Caco-2 (cell line): ENCODE measurements at regions of chr12 and their contacts with region 1.

Region 1: DNA sequence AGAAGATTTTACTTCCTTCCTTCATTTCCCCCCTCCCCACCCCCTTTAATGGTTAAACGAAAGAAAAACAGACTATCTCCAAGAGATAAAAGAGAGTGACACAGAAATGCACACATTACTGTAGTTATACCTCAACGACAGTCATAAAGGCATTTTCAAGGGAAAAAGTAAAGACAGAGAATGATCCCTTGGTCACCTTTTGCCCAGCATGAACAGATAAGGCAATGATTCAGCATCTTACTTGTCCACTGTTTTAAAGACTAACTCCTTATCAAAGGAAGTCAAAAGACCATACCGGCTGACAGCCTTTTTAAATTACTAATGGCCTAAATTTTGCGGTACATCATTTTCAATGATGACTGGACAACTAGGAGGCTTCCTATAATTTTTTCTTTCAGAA is 326.6 kb downstream of the PAWR start:
- DNase-seq: peak; percentile 48 to 62
- H3K4me3 ChIP-seq: no peak overlapping the region
- H3K4me3 Mint-ChIP-seq: no peak overlapping the region
- H3K27ac Mint-ChIP-seq: peak overlapping the region; percentile 63
- H3K4me1 ChIP-seq: peaks cover 64% of the 10 kb centered on the region
- H3K4me1 Mint-ChIP-seq: peaks cover 35% of the 10 kb centered on the region
- H3K27me3 ChIP-seq: no peaks in the 10 kb centered on the region
- H3K27me3 Mint-ChIP-seq: no peaks in the 10 kb centered on the region
- CTCF ChIP-seq: no peak

Region 2: GRCh38 chr12:79233341-79233781 is 130.8 kb before region 1 on chr12:
- CTCF ChIA-PET with region 1: no interaction called
- POLR2A ChIA-PET with region 1: no interaction called
- intact Hi-C with region 1: no loop called
- DNase-seq: no peak
- H3K4me3 ChIP-seq: no peak overlapping the region
- H3K4me3 Mint-ChIP-seq: no peak overlapping the region
- H3K27ac Mint-ChIP-seq: no peak overlapping the region
- H3K4me1 ChIP-seq: no peaks in the 10 kb centered on the region
- H3K4me1 Mint-ChIP-seq: no peaks in the 10 kb centered on the region
- H3K27me3 ChIP-seq: no peaks in the 10 kb centered on the region; the same call in 1 of the 2 replicates
- H3K27me3 Mint-ChIP-seq: peaks cover 5% of the 10 kb centered on the region
- CTCF ChIP-seq: no peak

Region 3: GRCh38 chr12:79300166-79300501 is 64.1 kb before region 1 on chr12:
- CTCF ChIA-PET with region 1: no interaction called
- POLR2A ChIA-PET with region 1: no interaction called
- intact Hi-C with region 1: loop called (anchors 2 kb)
- DNase-seq: peak; percentile 65 to 66
- H3K4me3 ChIP-seq: no peak overlapping the region
- H3K4me3 Mint-ChIP-seq: no peak overlapping the region
- H3K27ac Mint-ChIP-seq: no peak overlapping the region
- H3K4me1 ChIP-seq: peaks cover 13% of the 10 kb centered on the region
- H3K4me1 Mint-ChIP-seq: no peaks in the 10 kb centered on the region
- H3K27me3 ChIP-seq: no peaks in the 10 kb centered on the region
- H3K27me3 Mint-ChIP-seq: no peaks in the 10 kb centered on the region
- CTCF ChIP-seq: no peak

Region 4: GRCh38 chr12:79531122-79531913 is 167.1 kb after region 1 on chr12:
- CTCF ChIA-PET with region 1: no interaction called
- POLR2A ChIA-PET with region 1: no interaction called
- intact Hi-C with region 1: loop called (anchors 1 kb)
- DNase-seq: no peak
- H3K4me3 ChIP-seq: no peak overlapping the region
- H3K4me3 Mint-ChIP-seq: no peak overlapping the region
- H3K27ac Mint-ChIP-seq: peak overlapping the region; percentile 78
- H3K4me1 ChIP-seq: peaks cover 62% of the 10 kb centered on the region
- H3K4me1 Mint-ChIP-seq: peaks cover 36% of the 10 kb centered on the region
- H3K27me3 ChIP-seq: no peaks in the 10 kb centered on the region
- H3K27me3 Mint-ChIP-seq: no peaks in the 10 kb centered on the region
- CTCF ChIP-seq: no peak